GM12878 (cell line): ENCODE measurements at regions of chr18 and their contacts with region 1.

Region 1: GRCh38 chr18:2818281-2818680 is 28.5 kb upstream of the EMILIN2 start:
- DNase-seq: no peak
- ATAC-seq: no peak
- H3K4me3 ChIP-seq: no peak overlapping the region
- H3K27ac ChIP-seq: no peak overlapping the region
- H3K4me1 ChIP-seq: no peaks in the 10 kb centered on the region
- H3K27me3 ChIP-seq: no peaks in the 10 kb centered on the region
- CTCF ChIP-seq: no peak
- EP300 ChIP-seq: no peak
- POLR2A ChIP-seq: no peak
- RAD21 ChIP-seq: no peak

Region 2: GRCh38 chr18:2758309-2758708 is 60.0 kb before region 1 on chr18:
- CTCF ChIA-PET with region 1: no interaction called
- POLR2A ChIA-PET with region 1: no interaction called
- RAD21 ChIA-PET with region 1: no interaction called
- SMC1A ChIA-PET with region 1: no interaction called
- in situ Hi-C with region 1: no loop called
- intact Hi-C with region 1: loop called (anchors 10 kb)
- DNase-seq: no peak
- ATAC-seq: no peak
- H3K4me3 ChIP-seq: no peak overlapping the region
- H3K27ac ChIP-seq: no peak overlapping the region
- H3K4me1 ChIP-seq: no peaks in the 10 kb centered on the region
- H3K27me3 ChIP-seq: no peaks in the 10 kb centered on the region
- CTCF ChIP-seq: no peak
- EP300 ChIP-seq: no peak
- POLR2A ChIP-seq: no peak
- RAD21 ChIP-seq: no peak

Region 3: GRCh38 chr18:2776601-2777000 is 41.7 kb before region 1 on chr18:
- CTCF ChIA-PET with region 1: no interaction called
- POLR2A ChIA-PET with region 1: no interaction called
- RAD21 ChIA-PET with region 1: no interaction called
- SMC1A ChIA-PET with region 1: no interaction called
- in situ Hi-C with region 1: no loop called
- intact Hi-C with region 1: no loop called
- DNase-seq: no peak
- ATAC-seq: no peak
- H3K4me3 ChIP-seq: no peak overlapping the region
- H3K27ac ChIP-seq: no peak overlapping the region
- H3K4me1 ChIP-seq: no peaks in the 10 kb centered on the region
- H3K27me3 ChIP-seq: no peaks in the 10 kb centered on the region
- CTCF ChIP-seq: no peak
- EP300 ChIP-seq: no peak
- POLR2A ChIP-seq: no peak
- RAD21 ChIP-seq: no peak